ENCODE measurements at regions of chr17 and their contacts with region 1.

Region 1: GRCh38 chr17:43760254-43760852 is 1.8 kb upstream of the SOST start:
- DNase-seq: peak; percentile 95
- H3K4me3 ChIP-seq: no peak overlapping the region
- H3K27ac ChIP-seq: no peak overlapping the region
- H3K4me1 ChIP-seq: no peaks in the 10 kb centered on the region
- H3K27me3 ChIP-seq: peaks cover 3% of the 10 kb centered on the region
- CTCF ChIP-seq: peak; percentile 97 to 99 (median 98)
- POLR2A ChIP-seq: no peak

Region 2: GRCh38 chr17:43576563-43577229 is 183.7 kb before region 1 on chr17:
- intact Hi-C with region 1: loop called (anchors 10 kb)
- DNase-seq: peak; percentile 46
- H3K4me3 ChIP-seq: no peak overlapping the region
- H3K27ac ChIP-seq: no peak overlapping the region
- H3K4me1 ChIP-seq: no peaks in the 10 kb centered on the region
- H3K27me3 ChIP-seq: no peaks in the 10 kb centered on the region
- CTCF ChIP-seq: peak; percentile 91 to 97 (median 94)
- POLR2A ChIP-seq: no peak

Region 3: GRCh38 chr17:43694077-43694870 is 66.1 kb before region 1 on chr17:
- intact Hi-C with region 1: loop called (anchors 1 kb)
- DNase-seq: peak; percentile 74
- H3K4me3 ChIP-seq: no peak overlapping the region
- H3K27ac ChIP-seq: no peak overlapping the region
- H3K4me1 ChIP-seq: no peaks in the 10 kb centered on the region
- H3K27me3 ChIP-seq: no peaks in the 10 kb centered on the region
- CTCF ChIP-seq: peak; percentile 83 to 96 (median 90)
- POLR2A ChIP-seq: no peak

Region 4: GRCh38 chr17:43784628-43785101 is 24.3 kb after region 1 on chr17:
- intact Hi-C with region 1: no loop called
- DNase-seq: no peak
- H3K4me3 ChIP-seq: no peak overlapping the region
- H3K27ac ChIP-seq: no peak overlapping the region
- H3K4me1 ChIP-seq: no peaks in the 10 kb centered on the region
- H3K27me3 ChIP-seq: no peaks in the 10 kb centered on the region
- CTCF ChIP-seq: no peak
- POLR2A ChIP-seq: no peak